AG04449 (cell line): ENCODE measurements at regions of chr19 and their contacts with region 1.

Region 1: GRCh38 chr19:10936661-10937084 is 8.1 kb downstream of the TIMM29 start:
- DNase-seq: peak; percentile 19
- H3K4me3 ChIP-seq: no peak overlapping the region
- CTCF ChIP-seq: peak; percentile 62

Region 2: DNA sequence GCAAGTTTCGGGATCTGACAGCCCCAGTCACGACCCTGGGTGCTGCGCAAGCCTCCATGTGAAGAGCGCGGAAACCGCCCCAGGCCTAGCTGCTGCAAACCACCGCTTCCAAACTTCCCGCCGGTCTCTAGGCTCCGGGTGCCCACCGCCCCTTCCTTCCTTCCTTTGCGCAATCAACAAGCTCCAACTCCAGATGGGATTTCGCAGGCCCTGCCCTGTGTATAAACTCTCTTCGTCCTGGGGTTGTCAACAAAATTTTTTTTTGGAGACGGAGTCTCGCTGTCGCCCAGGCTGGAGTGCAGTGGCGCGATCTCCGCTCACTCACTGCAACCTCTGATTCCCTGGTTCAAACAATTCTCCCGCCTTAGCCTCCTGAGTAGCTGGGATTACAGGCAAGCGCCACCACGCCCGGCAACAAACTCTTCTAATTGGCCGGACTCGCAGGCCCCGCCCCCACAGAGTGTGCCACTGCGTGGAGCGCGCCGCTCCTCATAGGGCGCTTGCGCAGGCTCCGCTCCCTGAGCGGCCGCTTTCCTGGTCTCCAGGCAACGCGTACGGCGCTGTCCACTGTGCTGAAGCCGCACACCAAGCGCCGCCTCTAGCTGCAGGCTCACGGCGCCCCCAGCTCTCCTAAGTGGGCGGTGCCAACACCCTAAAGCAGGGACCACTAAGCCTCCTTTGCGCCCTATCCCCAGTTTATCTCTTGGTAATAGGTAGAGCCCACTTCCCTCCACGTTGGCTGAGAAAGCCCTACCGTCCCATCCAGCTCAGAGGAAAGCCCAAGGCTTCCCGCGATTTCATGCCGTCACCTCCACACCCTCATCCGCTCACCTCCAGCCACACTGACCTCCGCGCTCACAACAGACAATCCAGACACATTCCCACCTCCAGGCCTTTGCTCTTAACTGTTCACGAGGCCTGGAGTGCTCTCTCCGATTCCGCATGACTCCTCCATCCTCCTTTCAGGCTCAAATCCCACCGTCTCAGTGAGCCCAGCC is 241.0 kb before region 1 on chr19:
- CTCF ChIA-PET with region 1: no interaction called
- POLR2A ChIA-PET with region 1: no interaction called
- DNase-seq: no peak
- H3K4me3 ChIP-seq: peak overlapping the region; percentile 27
- CTCF ChIP-seq: no peak

Region 3: GRCh38 chr19:10820173-10820572 is 116.5 kb before region 1 on chr19:
- CTCF ChIA-PET with region 1: no interaction called
- POLR2A ChIA-PET with region 1: no interaction called
- DNase-seq: no peak
- H3K4me3 ChIP-seq: no peak overlapping the region
- CTCF ChIP-seq: no peak

Region 4: GRCh38 chr19:10848230-10848856 is 88.3 kb before region 1 on chr19 and contains the start of gene C19orf38:
- CTCF ChIA-PET with region 1: no interaction called
- POLR2A ChIA-PET with region 1: no interaction called
- DNase-seq: no peak
- H3K4me3 ChIP-seq: no peak within 1 kb of the TSS
- CTCF ChIP-seq: no peak

Region 5: DNA sequence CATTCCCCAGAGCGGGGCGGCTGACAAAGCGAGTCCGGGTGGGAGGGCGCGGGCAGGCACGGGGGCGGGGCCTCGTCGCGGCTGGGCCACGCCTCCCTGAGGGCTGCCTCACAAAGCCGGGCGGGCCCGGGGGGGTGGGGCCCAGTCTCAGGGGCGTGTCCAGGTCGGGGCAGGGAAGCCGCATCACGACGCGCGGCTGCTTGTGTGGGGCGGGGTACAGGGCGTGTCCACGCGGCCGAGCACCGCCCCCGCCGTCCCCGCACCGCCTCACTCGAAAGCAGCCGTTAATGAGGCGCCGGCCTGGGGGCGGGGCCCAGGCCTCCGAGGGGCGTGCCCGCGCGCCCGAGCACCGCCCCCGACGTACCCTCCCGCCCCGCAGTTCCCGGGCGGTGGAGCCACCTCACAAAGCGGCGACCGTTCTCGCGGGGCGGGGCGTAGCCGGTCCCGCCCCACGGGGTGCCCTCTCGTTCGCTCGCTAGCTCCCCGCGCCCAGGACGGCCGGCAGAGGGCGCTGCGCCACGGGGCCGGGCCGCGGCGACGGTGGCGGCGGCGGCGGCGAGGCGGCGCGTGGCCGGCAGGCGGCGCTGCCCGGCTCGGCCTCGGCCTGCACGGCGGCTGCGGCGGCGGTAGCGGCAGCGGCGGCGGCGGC is 65.6 kb before region 1 on chr19 and contains the start of gene CARM1:
- CTCF ChIA-PET with region 1: interaction called, 20 read pairs
- POLR2A ChIA-PET with region 1: no interaction called
- DNase-seq: peak; percentile 76
- H3K4me3 ChIP-seq: peak within 1 kb of the TSS; percentile 78
- CTCF ChIP-seq: peak; percentile 81

Region 6: GRCh38 chr19:10946964-10947657 is 10.4 kb after region 1 on chr19:
- CTCF ChIA-PET with region 1: interaction called, 73 read pairs
- POLR2A ChIA-PET with region 1: no interaction called
- DNase-seq: peak; percentile 78
- H3K4me3 ChIP-seq: no peak overlapping the region
- CTCF ChIP-seq: no peak

Region 7: GRCh38 chr19:10960314-10961072 is 23.8 kb after region 1 on chr19 and contains the start of gene SMARCA4:
- CTCF ChIA-PET with region 1: interaction called, 36 read pairs
- POLR2A ChIA-PET with region 1: no interaction called
- DNase-seq: peak; percentile 40
- H3K4me3 ChIP-seq: peak within 1 kb of the TSS; percentile 86
- CTCF ChIP-seq: no peak

Region 8: DNA sequence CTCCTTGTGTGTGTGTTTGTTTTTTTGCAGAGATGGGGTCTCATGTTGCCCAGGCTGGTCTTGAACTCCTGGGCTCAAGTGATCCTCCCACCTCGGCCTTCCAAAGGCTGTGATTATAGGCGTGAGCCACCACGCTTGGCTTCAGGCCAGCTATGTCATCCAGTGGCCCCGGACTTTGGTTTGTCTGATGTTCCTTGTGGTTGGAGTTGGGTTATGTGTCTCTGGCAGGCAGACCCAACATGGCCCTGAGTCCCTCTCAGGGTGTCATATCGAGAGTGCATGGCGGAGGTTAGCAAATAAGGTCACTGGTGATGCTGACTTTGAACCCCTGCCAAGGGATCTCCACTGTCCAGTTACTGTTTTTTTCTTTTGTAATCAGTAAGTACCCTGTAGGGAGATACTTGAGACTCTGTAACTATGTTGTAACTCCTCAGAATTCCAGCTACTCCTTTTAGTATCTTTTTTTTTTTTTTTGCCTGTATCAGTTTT is 61.4 kb after region 1 on chr19:
- CTCF ChIA-PET with region 1: interaction called, 10 read pairs
- POLR2A ChIA-PET with region 1: no interaction called
- DNase-seq: no peak
- H3K4me3 ChIP-seq: no peak overlapping the region
- CTCF ChIP-seq: no peak